Activated CD8-positive, alpha-beta memory T cell treated with anti-CD3 and anti-CD28 coated beads, Interleukin-2, amount 10 ng/mL, durations not matched to agents 7 days and 5 days (primary cell): ENCODE measurements at regions of chr2 and their contacts with region 1.

Region 1: DNA sequence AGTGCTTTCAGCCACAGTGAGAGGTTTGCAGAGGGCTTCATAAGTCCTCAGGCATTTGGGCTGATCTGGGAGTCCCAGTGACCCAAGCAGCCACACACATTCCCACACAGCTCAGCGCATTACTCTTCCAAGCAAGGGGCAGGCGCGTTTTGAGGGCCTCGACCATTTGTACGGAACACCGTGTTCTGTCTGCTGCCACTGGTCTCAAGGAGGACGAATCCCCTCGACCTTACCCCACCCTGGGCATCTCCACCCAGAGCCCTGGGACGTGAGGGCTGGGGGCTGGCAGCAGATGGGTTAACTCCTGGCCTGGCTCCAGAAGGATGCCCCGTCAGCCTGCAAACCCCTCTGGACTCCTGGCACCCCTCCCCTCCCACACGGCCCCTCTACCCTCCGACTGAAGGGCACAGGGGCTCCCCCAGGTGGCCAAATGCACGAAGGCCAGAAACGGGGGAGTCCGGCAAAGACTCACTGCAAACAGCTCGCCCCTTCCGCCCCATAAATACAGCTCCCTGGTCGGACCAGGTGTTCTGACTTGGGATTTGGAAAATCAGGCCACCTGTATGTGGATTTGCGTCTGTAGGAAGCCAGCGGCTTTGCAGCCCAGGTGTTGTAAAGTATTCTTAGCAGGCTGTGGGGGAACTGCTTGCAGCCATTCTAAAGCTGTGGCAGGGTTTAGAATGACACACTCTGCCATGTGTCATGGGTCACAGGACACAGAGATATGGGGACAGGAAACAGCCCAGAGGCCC is 33.6 kb upstream of the PTMA start:
- DNase-seq: peak; percentile 75
- ATAC-seq: peak; percentile 71
- H3K4me3 Mint-ChIP-seq: no peak overlapping the region
- H3K27ac Mint-ChIP-seq: peak overlapping the region; percentile 14
- H3K4me1 Mint-ChIP-seq: peaks cover 14% of the 10 kb centered on the region
- H3K27me3 Mint-ChIP-seq: no peaks in the 10 kb centered on the region

Region 2: GRCh38 chr2:231601349-231602229 is 73.2 kb before region 1 on chr2:
- CTCF ChIA-PET with region 1: interaction called, 10 read pairs
- DNase-seq: peak; percentile 88
- ATAC-seq: peak; percentile 58
- H3K4me3 Mint-ChIP-seq: no peak overlapping the region
- H3K27ac Mint-ChIP-seq: no peak overlapping the region
- H3K4me1 Mint-ChIP-seq: peaks cover 7% of the 10 kb centered on the region
- H3K27me3 Mint-ChIP-seq: peaks cover 5% of the 10 kb centered on the region

Region 3: DNA sequence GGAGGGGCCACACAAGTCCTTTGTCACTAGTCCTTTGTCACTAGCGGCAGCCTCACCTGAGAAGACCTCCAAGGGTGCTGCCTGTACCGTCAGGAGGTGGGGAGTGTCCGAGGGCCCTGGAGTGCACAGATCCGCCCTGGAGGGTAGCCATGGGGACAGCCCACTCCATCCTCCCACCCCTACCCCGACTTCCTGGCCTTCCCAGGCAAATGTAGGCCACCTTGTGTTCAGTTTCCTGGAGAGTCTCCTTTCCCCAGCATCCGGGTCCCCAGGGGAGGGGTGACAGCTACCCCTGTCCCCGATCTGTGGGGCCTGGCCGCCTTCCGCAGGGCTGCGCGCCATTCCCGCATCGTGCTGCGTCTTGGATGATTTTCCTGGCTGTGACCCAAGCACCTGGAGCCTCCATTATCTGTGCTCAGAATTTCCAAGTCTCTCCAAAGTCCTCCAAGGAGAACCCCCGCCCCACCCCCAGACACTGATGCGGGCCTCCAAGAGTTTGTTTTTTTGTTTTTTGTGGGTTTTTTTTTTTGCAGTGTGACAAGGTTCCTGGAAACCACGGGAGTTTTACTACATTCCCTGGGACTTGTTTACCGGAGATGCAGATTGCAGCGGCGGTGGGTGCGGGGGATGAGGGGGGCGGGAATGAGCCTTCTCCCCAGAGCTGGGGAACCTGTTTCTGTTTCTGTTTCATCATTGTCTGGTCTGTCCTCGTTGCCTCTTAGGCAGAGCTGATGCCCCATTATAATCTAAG is 53.5 kb before region 1 on chr2:
- CTCF ChIA-PET with region 1: interaction called, 10 read pairs
- DNase-seq: no peak
- ATAC-seq: peak; percentile 68
- H3K4me3 Mint-ChIP-seq: no peak overlapping the region
- H3K27ac Mint-ChIP-seq: no peak overlapping the region
- H3K4me1 Mint-ChIP-seq: peaks cover 16% of the 10 kb centered on the region
- H3K27me3 Mint-ChIP-seq: no peaks in the 10 kb centered on the region

Region 4: DNA sequence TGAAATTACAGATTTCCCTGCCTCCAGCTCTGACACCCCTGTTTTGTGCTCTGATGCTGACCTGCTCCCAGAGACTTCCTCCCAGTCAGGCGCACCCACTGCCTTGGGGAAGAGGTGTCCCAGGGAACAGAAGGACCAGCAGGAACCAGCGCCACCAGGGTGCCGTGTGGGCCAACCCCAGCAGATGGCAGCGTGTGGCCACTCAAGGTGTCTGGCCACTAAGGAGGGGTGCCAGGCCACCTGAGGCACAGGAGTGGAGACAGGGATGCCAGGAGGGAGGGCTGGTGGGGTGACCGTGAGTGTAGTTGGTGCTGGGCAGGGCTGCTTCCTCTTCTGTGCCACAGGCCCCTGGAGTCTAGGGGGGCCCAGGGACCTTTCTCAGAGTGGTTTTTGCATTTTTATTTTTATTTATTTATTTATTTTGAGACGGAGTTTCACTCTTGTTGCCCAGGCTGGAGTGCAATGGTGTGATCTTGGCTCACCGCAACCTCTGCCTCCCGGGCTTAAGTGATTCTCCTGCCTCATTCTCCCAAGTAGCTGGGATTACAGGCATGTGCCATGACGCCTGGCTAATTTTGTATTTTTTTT is 26.1 kb before region 1 on chr2:
- CTCF ChIA-PET with region 1: interaction called, 65 read pairs
- DNase-seq: peak; percentile 72
- ATAC-seq: peak; percentile 92
- H3K4me3 Mint-ChIP-seq: no peak overlapping the region
- H3K27ac Mint-ChIP-seq: no peak overlapping the region
- H3K4me1 Mint-ChIP-seq: no peaks in the 10 kb centered on the region
- H3K27me3 Mint-ChIP-seq: peaks cover 6% of the 10 kb centered on the region

Region 5: DNA sequence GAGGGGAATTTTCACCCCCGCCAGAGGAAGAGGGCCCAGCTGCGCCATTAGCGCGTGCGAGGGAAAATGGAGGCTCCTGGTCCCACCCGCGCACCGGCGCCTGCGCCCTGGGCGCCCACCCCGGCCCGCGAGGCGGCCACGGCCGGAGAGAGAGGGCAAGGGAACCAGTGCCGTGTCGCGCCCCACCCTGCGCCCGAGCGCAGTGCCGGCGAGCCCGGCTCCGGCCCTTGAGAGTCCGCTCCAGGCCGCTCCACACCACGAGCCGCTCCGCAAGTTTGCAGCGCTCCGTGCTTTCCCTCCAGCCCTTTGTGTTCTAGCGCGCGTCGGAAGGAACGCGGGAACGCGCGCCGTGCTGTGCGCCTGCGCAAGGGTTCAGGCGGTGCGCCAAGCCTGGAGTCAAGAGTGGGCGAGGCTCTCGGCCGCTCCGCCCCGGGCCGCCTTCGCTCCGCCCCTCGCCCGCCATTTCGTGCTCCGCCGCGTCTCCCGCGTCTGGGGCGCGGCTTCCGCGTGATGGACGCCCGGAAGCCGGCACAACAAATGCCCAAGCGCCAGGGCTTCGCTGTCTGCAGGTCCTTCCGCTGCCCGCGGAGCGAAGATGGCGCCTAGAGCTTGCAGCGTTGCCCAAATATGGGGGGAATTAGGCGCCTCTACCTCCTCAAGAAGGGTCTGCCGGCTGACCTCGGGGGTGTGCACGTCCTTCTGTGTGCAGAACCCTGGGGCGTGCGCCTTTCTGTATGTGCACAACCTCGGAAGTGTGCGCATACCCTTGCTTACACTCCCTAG is 12.5 kb before region 1 on chr2:
- CTCF ChIA-PET with region 1: interaction called, 38 read pairs
- DNase-seq: peak; percentile 97
- ATAC-seq: peak; percentile 95
- H3K4me3 Mint-ChIP-seq: peak overlapping the region; percentile 69
- H3K27ac Mint-ChIP-seq: peak overlapping the region; percentile 94
- H3K4me1 Mint-ChIP-seq: peaks cover 15% of the 10 kb centered on the region
- H3K27me3 Mint-ChIP-seq: no peaks in the 10 kb centered on the region

Region 6: GRCh38 chr2:231706731-231707624 is 32.2 kb after region 1 on chr2:
- CTCF ChIA-PET with region 1: interaction called, 680 read pairs
- DNase-seq: peak; percentile 98
- ATAC-seq: peak; percentile 43
- H3K4me3 Mint-ChIP-seq: peak overlapping the region; percentile 93
- H3K27ac Mint-ChIP-seq: peak overlapping the region; percentile 99
- H3K4me1 Mint-ChIP-seq: peaks cover 19% of the 10 kb centered on the region
- H3K27me3 Mint-ChIP-seq: peaks cover 2% of the 10 kb centered on the region

Region 7: DNA sequence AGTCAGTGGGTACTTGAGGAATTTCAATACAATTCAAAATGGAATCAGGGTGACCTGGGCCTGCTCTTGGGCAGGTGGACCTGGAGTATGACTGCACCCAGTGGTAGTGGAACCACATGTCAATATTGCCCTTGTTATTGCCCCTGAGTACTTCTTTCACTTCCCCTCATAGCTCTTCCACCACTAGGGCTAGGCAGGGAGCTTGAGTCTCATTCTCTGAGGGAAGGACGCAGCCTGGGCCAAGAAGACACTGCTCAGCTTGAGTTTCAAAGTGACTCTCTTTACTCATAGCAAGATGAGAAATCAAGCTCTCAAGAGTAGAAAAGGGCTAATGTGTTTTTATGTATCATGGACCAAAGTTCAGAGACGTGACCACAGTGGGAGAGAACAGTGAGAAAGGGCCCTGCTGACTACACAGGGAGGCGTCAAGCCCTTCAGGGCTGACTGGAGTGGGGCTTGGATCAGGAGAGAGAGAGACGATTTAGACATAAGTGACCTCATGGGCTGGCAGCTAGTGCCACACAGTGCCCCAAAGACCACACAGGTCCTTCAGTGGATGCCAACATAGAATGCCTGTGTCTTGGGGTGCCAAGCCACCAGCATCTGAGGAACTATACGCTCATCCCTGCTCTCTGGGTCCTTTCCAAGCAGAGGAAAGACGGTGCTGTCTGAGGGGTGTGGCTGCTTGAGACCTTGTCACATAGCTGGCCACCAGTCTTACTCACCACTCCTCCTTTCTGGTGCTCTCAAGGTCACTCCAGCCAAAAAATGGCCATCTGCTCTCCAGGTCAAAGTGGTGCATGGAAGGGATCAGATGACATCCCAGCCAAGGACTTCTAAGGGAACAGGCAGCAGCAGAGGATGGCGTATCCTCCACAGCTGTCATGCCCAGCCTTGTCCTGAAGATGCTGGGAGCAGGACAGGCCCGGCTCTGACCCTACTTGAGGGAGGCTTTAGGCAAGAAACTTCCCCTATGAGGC is 46.5 kb after region 1 on chr2:
- CTCF ChIA-PET with region 1: interaction called, 680 read pairs
- DNase-seq: no peak
- ATAC-seq: no peak
- H3K4me3 Mint-ChIP-seq: no peak overlapping the region
- H3K27ac Mint-ChIP-seq: no peak overlapping the region
- H3K4me1 Mint-ChIP-seq: peaks cover 7% of the 10 kb centered on the region
- H3K27me3 Mint-ChIP-seq: no peaks in the 10 kb centered on the region

Region 8: DNA sequence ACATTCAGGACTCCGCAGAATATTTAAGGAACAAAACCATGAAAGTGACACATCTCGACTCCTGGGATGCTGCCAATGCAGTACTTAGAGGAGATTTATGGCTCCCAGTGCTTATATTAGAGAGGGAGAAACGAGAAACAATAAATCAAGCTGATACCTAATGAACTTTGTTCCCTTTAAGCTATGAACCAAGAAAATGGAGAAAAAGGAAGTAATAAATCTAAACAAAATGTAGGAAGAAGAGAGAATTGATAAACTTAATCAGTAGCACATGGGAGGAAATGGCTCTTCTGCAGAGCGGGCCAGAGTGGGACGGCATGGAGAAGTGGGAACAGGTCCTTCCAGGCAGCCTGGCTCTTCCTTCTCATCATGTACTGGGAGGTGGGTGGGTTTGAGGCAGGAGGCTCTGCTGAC is 208.7 kb after region 1 on chr2:
- CTCF ChIA-PET with region 1: no interaction called
- DNase-seq: no peak
- ATAC-seq: no peak
- H3K4me3 Mint-ChIP-seq: no peak overlapping the region
- H3K27ac Mint-ChIP-seq: no peak overlapping the region
- H3K4me1 Mint-ChIP-seq: no peaks in the 10 kb centered on the region
- H3K27me3 Mint-ChIP-seq: peaks cover 53% of the 10 kb centered on the region